ENCODE measurements at regions of chr5 and their contacts with region 1.

Region 1: GRCh38 chr5:180860887-180861822 is at the start of gene ZFP62:
- DNase-seq: peak; percentile 92
- H3K4me3 ChIP-seq: peak within 1 kb of the TSS; percentile 88 to 97 (median 96)
- H3K27ac ChIP-seq: peak within 1 kb of the TSS; percentile 60
- H3K4me1 ChIP-seq: peaks cover 7% of the 10 kb centered on the region
- H3K27me3 ChIP-seq: no peaks in the 10 kb centered on the region
- CTCF ChIP-seq: no peak
- total RNA-seq, gene ZFP62: 17.2 to 17.5 TPM

Region 2: GRCh38 chr5:180831139-180832048 is 29.8 kb before region 1 on chr5:
- CTCF ChIA-PET with region 1: interaction called, 12 read pairs
- dilution Hi-C with region 1: loop called (anchors 5 kb)
- in situ Hi-C with region 1: no loop called
- intact Hi-C with region 1: loop called (anchors 1 kb)
- DNase-seq: peak; percentile 40
- H3K4me3 ChIP-seq: peak overlapping the region; percentile 49 to 69 (median 62)
- H3K27ac ChIP-seq: peak overlapping the region; percentile 75
- H3K4me1 ChIP-seq: peaks cover 27% of the 10 kb centered on the region
- H3K27me3 ChIP-seq: no peaks in the 10 kb centered on the region
- CTCF ChIP-seq: peak in 1 of 2 donors; percentile 20

Region 3: DNA sequence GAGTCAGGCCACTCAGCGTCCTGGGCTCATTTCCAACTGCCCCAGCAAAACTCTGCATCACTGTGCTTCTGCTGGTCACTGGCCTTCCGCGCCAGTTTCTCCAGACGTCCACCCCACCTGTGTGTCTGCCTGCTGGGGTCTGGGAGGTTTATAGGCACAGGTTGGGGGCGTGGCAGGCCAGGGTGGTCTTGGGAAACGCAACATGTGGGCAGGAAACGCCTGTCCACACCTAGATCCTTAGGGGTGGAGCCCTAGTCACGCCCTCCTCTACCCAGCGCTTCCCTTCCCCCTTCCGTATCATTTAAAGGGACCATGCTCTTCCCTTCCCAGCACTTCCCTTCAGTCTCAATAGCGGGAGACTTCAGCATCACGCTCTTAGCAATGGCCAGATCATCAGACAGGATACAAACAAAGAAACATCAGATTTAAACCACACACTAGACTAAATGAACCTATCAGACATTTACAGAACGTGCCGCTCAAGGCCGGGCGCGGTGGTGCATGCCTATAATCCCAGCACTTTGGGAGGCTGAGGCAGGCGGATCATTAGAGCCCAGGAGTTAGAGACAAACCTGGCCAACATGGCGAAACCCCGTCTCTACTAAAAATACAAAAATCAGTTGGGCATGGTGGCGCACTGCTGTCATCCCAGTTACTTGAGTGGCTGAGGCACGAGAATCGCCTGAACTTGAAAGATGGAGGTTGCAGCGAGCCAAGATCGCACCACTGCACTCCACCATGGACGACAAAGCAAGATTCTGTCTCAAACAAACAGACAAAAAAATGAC is 167.1 kb after region 1 on chr5:
- CTCF ChIA-PET with region 1: no interaction called
- dilution Hi-C with region 1: no loop called
- in situ Hi-C with region 1: no loop called
- intact Hi-C with region 1: no loop called
- DNase-seq: no peak
- H3K4me3 ChIP-seq: no peak overlapping the region
- H3K27ac ChIP-seq: no peak overlapping the region
- H3K4me1 ChIP-seq: no peaks in the 10 kb centered on the region
- H3K27me3 ChIP-seq: no peaks in the 10 kb centered on the region
- CTCF ChIP-seq: no peak

Region 4: DNA sequence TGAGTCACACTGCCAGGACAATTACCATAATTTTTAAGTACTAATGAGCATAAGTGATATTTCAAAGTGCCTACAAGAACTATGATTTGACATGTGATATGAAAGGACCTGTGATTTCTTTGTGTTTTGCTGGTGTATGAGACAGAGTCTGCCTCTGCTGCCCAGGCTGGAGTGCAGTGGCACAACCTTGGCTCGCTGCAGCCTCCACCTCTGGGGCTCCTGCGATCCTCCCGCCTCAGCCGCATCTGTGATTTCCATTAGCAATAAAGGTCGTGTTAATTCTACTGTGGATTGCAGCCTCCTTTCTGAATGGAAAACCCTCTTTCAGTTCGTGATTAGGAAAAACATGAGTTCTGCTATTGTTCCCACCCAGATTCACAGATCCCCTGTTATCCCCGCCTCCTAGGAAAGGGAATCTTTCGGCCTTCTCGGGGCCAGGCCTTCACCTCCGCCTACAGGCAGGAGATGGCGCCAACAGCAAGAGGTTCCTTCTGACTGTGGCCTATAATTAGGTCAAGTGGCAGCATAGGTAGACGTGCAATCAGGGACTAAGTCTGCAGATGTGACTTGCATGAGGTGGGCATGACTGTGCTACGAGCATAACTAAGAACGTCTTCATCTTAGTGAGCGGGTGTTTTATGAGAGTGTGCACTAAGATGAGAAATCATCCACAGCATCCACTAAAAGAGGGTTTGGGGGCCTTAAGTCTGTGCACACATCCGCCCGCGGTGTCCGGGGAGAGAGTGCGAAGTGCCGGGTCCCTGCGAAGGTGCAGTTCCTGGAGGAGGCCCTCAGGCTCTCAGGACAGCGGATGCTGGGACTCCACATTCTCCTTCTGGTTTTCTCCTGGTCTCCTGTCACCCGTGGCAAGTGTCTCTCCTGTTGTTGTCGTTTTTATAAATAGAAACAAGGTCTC is 320.8 kb after region 1 on chr5:
- CTCF ChIA-PET with region 1: no interaction called
- dilution Hi-C with region 1: no loop called
- in situ Hi-C with region 1: no loop called
- intact Hi-C with region 1: loop called (anchors 10 kb)
- DNase-seq: peak; percentile 56
- H3K4me3 ChIP-seq: no peak overlapping the region
- H3K27ac ChIP-seq: no peak overlapping the region
- H3K4me1 ChIP-seq: peaks cover 3% of the 10 kb centered on the region
- H3K27me3 ChIP-seq: no peaks in the 10 kb centered on the region
- CTCF ChIP-seq: peak; percentile 82 to 83

Measured in mammary epithelial cell (primary cell).